Vagina (tissue), 2 donors: ENCODE measurements at regions of chr1 and their contacts with region 1.

Region 1: GRCh38 chr1:183537405-183537804 is 52.9 kb downstream of the NCF2 start:
- DNase-seq: no peak
- H3K4me3 ChIP-seq: no peak overlapping the region
- H3K27ac ChIP-seq: no peak overlapping the region
- H3K4me1 ChIP-seq: no peaks in the 10 kb centered on the region
- H3K27me3 ChIP-seq: no peaks in the 10 kb centered on the region
- CTCF ChIP-seq: no peak
- POLR2A ChIP-seq: no peak

Region 2: DNA sequence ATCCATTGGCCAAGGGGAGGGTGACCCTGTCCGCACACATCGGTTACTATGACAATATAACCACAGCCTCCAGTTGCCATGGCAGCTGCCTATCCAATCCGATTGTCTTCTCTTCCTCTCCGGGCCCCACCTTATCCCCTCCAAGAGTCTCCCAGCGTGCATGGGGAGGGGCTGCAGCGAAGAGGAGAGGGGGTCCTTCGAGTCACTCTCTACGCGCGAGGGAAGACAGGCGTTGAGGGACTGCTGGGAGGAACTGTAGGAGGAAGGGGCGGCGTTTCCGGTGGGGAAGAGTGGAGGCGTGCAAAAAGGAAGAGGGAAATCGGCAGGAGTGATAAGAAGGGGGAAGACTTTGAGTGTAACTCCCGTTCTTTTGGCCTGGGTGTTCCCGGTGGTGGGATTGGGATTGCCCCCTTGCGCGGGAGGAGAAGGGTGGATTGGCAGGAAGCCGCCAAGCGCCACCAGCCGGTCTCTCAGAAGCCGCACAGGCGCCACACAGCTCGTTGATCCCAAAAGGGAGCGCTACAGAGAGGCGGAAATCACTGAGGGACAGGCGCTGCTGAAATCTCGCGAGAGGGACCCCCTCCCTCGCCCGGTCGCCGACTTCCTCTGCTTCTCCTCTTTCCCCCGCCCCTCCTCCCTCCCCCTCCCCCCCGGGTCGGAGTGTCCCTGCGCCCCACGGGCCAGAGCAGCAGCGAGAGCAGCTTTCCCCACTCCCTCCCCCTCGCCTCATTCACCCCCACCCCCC is 65.5 kb before region 1 on chr1:
- intact Hi-C with region 1: loop called (anchors 10 kb)
- DNase-seq: peak; percentile 97 to 98
- H3K4me3 ChIP-seq: peak overlapping the region; percentile 91 to 95
- H3K27ac ChIP-seq: peak overlapping the region; percentile 91
- H3K4me1 ChIP-seq: peaks cover 39% of the 10 kb centered on the region
- H3K27me3 ChIP-seq: no peaks in the 10 kb centered on the region
- CTCF ChIP-seq: peak in 2 of 3 experiments; percentile 17 to 51
- POLR2A ChIP-seq: peak in 1 of 2 donors; percentile 27

Region 3: GRCh38 chr1:183590244-183591191 is 53.1 kb after region 1 on chr1 and contains the start of gene NCF2:
- intact Hi-C with region 1: no loop called
- DNase-seq: no peak
- H3K4me3 ChIP-seq: peak within 1 kb of the TSS in 1 of 2 donors; percentile 11
- H3K27ac ChIP-seq: peak within 1 kb of the TSS; percentile 29
- H3K4me1 ChIP-seq: peaks cover 26% of the 10 kb centered on the region
- H3K27me3 ChIP-seq: no peaks in the 10 kb centered on the region
- CTCF ChIP-seq: no peak
- POLR2A ChIP-seq: no peak
- total RNA-seq, gene NCF2: 12.5 TPM

Region 4: GRCh38 chr1:183734543-183735036 is 197.2 kb after region 1 on chr1:
- intact Hi-C with region 1: no loop called
- DNase-seq: no peak
- H3K4me3 ChIP-seq: no peak overlapping the region
- H3K27ac ChIP-seq: peak overlapping the region; percentile 9
- H3K4me1 ChIP-seq: peaks cover 13% of the 10 kb centered on the region
- H3K27me3 ChIP-seq: no peaks in the 10 kb centered on the region
- CTCF ChIP-seq: no peak
- POLR2A ChIP-seq: no peak